Pancreas (tissue), 10 donors: ENCODE measurements at regions of chr20 and their contacts with region 1.

Region 1: DNA sequence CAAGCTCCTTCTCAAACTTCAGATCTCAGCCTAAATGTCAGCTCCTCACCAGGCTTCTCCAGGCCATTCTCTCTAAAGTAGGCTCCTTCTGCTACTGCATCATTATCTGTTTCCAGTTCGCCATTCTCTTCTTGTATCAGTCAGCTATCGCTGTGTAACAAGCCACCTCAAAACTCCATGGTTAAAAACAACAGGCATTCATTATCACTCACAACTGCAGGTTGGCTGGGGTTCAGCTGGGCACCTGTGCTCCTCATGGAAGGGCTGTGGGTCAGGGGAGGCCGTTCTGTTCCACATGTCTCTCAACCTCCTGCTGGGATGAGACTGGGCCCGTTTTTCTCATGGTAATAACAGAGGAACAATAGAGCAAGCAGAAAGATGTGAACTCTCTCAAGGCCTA is 28.7 kb downstream of the PRND start:
- DNase-seq: no peak
- ATAC-seq: no peak
- H3K4me3 ChIP-seq: no peak overlapping the region
- H3K27ac ChIP-seq: no peak overlapping the region
- H3K4me1 ChIP-seq: no peaks in the 10 kb centered on the region
- H3K27me3 ChIP-seq: no peaks in the 10 kb centered on the region
- CTCF ChIP-seq: no peak

Region 2: DNA sequence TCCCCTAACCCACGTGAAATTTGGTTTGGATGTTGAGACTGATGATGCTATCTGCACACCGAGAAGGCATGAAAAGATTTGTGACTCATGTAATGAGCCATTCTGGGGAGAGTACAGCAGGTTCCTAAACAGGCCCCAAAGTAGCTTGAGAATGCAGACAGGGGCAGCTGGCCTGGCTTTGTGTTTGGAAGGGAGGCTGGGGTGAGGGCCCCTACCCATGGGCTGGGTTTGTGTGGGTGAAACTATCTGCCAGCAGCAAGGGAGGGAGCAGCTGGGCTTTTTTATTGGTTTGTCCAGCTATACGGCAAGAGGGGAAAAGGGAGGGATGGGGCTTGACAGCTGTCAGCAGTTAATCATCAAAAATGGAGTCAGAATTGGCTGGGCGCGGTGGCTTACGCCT is 648.0 kb before region 1 on chr20:
- intact Hi-C with region 1: no loop called
- DNase-seq: peak in 1 of 6 donors; percentile 6
- ATAC-seq: no peak
- H3K4me3 ChIP-seq: no peak overlapping the region
- H3K27ac ChIP-seq: no peak overlapping the region
- H3K4me1 ChIP-seq: no peaks in the 10 kb centered on the region
- H3K27me3 ChIP-seq: no peaks in the 10 kb centered on the region
- CTCF ChIP-seq: no peak

Region 3: GRCh38 chr20:4483486-4483885 is 266.9 kb before region 1 on chr20:
- intact Hi-C with region 1: no loop called
- DNase-seq: no peak
- ATAC-seq: no peak
- H3K4me3 ChIP-seq: no peak overlapping the region
- H3K27ac ChIP-seq: no peak overlapping the region
- H3K4me1 ChIP-seq: no peaks in the 10 kb centered on the region
- H3K27me3 ChIP-seq: no peaks in the 10 kb centered on the region
- CTCF ChIP-seq: no peak

Region 4: DNA sequence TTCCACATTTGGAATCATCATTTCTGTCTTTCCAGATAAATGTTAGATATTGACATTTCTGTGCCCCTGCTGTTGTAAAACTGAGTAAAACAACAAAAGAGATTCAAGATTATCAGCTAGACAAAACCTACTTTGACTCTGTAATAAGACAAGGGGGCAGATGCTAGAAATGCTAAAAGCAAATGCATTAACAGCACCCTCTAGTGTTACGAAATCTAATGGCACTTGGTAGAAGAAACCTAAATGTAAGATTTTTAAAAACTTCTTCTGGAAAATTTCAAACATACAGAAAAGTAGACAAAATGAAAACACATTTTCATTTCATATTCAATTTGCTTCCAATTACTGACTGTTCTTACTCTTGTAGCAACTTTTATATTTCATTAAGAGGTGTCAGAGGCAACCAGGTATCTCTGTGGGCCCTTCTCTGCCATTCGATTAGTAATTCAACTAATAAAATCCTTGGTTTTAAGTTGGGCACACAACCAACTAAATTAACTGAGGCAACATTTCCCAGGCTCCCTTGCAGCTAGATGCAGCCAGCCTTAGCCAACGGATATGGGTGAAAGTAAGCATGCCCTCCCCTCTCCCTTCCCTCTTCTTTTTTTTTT is 205.9 kb after region 1 on chr20:
- intact Hi-C with region 1: no loop called
- DNase-seq: no peak
- ATAC-seq: peak in 3 of 4 donors; percentile 76 to 84 (median 78)
- H3K4me3 ChIP-seq: no peak overlapping the region
- H3K27ac ChIP-seq: no peak overlapping the region
- H3K4me1 ChIP-seq: no peaks in the 10 kb centered on the region
- H3K27me3 ChIP-seq: no peaks in the 10 kb centered on the region
- CTCF ChIP-seq: peak; percentile 47 to 77 (median 56)

Region 5: DNA sequence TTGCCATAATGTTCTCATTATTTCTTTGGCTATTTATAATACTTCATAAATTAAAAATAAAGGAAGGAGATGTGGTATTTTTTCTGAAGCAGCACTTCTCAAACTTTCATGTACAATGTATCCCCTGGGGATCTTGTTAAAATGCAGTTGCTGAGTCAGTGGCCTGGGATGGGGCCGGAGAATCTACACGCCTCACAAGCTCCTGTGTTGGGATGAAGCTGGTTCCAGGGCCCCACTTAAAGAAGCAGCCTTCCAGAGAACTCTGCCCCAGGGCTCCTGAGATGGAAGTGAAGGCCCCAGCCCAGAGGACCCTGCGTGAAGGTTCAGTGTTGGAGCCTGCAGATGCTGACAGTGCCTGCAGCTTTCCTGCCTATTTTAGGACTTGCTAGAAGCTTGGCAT is 291.1 kb after region 1 on chr20:
- intact Hi-C with region 1: no loop called
- DNase-seq: no peak
- ATAC-seq: no peak
- H3K4me3 ChIP-seq: no peak overlapping the region
- H3K27ac ChIP-seq: no peak overlapping the region
- H3K4me1 ChIP-seq: no peaks in the 10 kb centered on the region
- H3K27me3 ChIP-seq: no peaks in the 10 kb centered on the region
- CTCF ChIP-seq: no peak

Region 6: GRCh38 chr20:5095931-5096330 is 345.6 kb after region 1 on chr20:
- intact Hi-C with region 1: loop called in 1 of 3 experiments (anchors 5 kb)
- DNase-seq: no peak
- ATAC-seq: no peak
- H3K4me3 ChIP-seq: no peak overlapping the region
- H3K27ac ChIP-seq: no peak overlapping the region
- H3K4me1 ChIP-seq: no peaks in the 10 kb centered on the region
- H3K27me3 ChIP-seq: no peaks in the 10 kb centered on the region
- CTCF ChIP-seq: no peak